PC-3 (cell line): ENCODE measurements at regions of chr7 and their contacts with region 1.

Region 1: GRCh38 chr7:151631968-151632749 is 112.5 kb upstream of the RHEB start:
- DNase-seq: peak; percentile 85
- ATAC-seq: peak; percentile 82
- H3K4me3 ChIP-seq: peak overlapping the region; percentile 96
- H3K27ac ChIP-seq: peak overlapping the region; percentile 62
- H3K4me1 ChIP-seq: peaks cover 24% of the 10 kb centered on the region
- H3K27me3 ChIP-seq: no peaks in the 10 kb centered on the region
- CTCF ChIP-seq: 0 out of 2 replicates have a peak, but pooled peaks have one; percentile 15

Region 2: GRCh38 chr7:151315038-151315655 is 317.0 kb before region 1 on chr7:
- CTCF ChIA-PET with region 1: no interaction called
- POLR2A ChIA-PET with region 1: no interaction called
- intact Hi-C with region 1: no loop called
- DNase-seq: peak; percentile 82
- ATAC-seq: peak; percentile 82
- H3K4me3 ChIP-seq: no peak overlapping the region
- H3K27ac ChIP-seq: no peak overlapping the region
- H3K4me1 ChIP-seq: peaks cover 4% of the 10 kb centered on the region; the same call in 1 of the 2 replicates
- H3K27me3 ChIP-seq: no peaks in the 10 kb centered on the region
- CTCF ChIP-seq: peak; percentile 78

Region 3: GRCh38 chr7:151570366-151570915 is 61.7 kb before region 1 on chr7:
- CTCF ChIA-PET with region 1: no interaction called
- POLR2A ChIA-PET with region 1: no interaction called
- intact Hi-C with region 1: loop called (anchors 2 kb)
- DNase-seq: peak; percentile 52
- ATAC-seq: no peak
- H3K4me3 ChIP-seq: no peak overlapping the region
- H3K27ac ChIP-seq: no peak overlapping the region
- H3K4me1 ChIP-seq: peaks cover 12% of the 10 kb centered on the region; the same call in 1 of the 2 replicates
- H3K27me3 ChIP-seq: no peaks in the 10 kb centered on the region
- CTCF ChIP-seq: peak; percentile 72

Region 4: GRCh38 chr7:151658778-151659177 is 26.6 kb after region 1 on chr7:
- CTCF ChIA-PET with region 1: no interaction called
- POLR2A ChIA-PET with region 1: no interaction called
- intact Hi-C with region 1: loop called (anchors 2 kb)
- DNase-seq: peak; percentile 59
- ATAC-seq: peak; percentile 44
- H3K4me3 ChIP-seq: no peak overlapping the region
- H3K27ac ChIP-seq: peak overlapping the region; percentile 81
- H3K4me1 ChIP-seq: peaks cover 42% of the 10 kb centered on the region
- H3K27me3 ChIP-seq: no peaks in the 10 kb centered on the region
- CTCF ChIP-seq: no peak

Region 5: DNA sequence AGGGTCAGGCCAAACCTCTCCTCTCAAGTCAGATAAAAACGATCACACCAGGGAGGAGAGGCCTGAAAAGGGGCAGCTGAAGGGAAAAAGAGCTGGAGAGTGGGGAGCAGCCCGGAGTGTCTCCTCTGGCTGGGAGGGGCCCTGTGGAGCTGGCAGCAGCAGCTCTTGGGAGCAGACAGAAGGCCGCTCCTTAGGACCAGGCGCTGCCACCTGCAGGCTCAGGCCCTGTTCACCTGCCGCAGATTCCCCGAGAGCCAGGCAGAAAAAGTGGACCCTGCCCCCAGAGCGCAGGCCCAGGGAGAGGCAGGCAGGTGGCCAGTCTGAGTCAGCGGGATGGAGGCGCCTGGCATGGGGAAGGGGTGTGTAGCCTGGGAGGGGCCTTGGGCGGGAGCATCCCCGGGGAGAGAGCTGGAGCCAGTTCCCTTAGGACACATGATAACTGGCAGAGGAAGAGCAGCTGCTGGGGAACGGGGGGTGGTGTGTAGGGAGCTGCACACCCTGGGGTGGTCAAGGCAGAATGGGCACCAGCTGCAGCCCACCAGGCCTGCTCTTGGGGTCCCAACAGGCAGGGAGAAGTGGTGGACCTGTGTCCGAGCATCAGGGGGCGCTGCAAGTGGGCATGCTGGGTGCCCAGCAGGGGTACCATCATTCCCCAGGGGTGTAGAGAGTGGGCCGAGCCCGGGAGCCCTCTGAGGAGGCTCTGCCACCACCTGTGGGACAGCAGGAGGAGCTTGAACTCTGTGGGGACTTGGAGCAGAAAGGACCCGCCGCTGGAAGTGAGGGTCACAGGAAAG is 64.8 kb after region 1 on chr7:
- CTCF ChIA-PET with region 1: interaction called, 20 read pairs
- POLR2A ChIA-PET with region 1: interaction called, 3 read pairs
- intact Hi-C with region 1: loop called (anchors 2 kb)
- DNase-seq: peak; percentile 70
- ATAC-seq: peak; percentile 74
- H3K4me3 ChIP-seq: no peak overlapping the region
- H3K27ac ChIP-seq: no peak overlapping the region
- H3K4me1 ChIP-seq: peaks cover 28% of the 10 kb centered on the region
- H3K27me3 ChIP-seq: no peaks in the 10 kb centered on the region
- CTCF ChIP-seq: 0 out of 2 replicates have a peak, but pooled peaks have one; percentile 20

Region 6: DNA sequence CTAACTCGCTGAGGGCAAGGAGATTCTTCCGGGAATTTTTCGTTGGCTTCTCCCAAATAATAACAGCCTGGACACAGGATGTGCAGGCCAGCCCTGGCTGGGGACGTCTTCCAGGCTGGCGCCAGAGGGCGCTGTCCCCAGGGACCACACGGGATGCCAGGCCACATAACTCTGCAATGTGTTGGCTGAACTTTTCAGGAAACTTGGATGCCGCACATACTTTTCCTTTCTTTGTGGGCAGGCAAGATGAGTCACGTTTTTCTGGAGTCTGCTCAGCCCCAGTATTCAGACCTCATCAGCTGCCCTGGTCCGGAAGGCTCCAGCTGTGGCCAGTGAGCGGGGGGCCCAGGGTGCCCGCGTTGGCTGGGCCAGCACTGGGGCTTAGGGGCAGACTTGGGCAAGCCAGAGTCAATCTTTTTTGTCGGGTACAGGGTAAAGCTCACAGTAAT is 122.0 kb after region 1 on chr7:
- CTCF ChIA-PET with region 1: interaction called, 4 read pairs
- POLR2A ChIA-PET with region 1: no interaction called
- intact Hi-C with region 1: loop called (anchors 1 kb)
- DNase-seq: peak; percentile 96
- ATAC-seq: peak; percentile 96
- H3K4me3 ChIP-seq: no peak overlapping the region
- H3K27ac ChIP-seq: no peak overlapping the region
- H3K4me1 ChIP-seq: peaks cover 23% of the 10 kb centered on the region
- H3K27me3 ChIP-seq: no peaks in the 10 kb centered on the region
- CTCF ChIP-seq: peak; percentile 96